GM10248 (cell line): ENCODE measurements at regions of chr6 and their contacts with region 1.

Region 1: GRCh38 chr6:149054559-149055194 is 262.8 kb upstream of the TAB2 start:
- DNase-seq: no peak
- CTCF ChIP-seq: no peak

Region 2: DNA sequence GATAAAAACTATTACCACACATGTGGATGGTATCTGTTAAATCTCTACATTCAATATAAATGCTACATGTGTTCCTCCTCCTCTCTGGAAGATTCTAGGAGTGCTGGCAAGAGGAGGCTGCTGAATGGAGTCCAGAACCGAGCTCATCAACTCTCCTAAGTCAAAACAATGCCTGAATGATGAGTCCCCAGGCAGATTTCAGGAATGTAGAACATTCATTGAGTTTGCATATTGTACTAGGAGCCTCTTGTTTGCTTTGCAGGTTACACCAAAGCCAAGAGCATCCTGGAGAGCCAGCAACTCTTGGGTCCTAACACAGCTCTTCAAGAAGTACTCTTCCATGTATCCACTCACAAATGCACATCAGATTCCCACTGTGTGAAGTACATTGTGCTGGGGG is 425.5 kb before region 1 on chr6:
- CTCF ChIA-PET with region 1: no interaction called
- POLR2A ChIA-PET with region 1: no interaction called
- DNase-seq: no peak
- CTCF ChIP-seq: no peak

Region 3: GRCh38 chr6:148972481-148972880 is 82.2 kb before region 1 on chr6:
- CTCF ChIA-PET with region 1: no interaction called
- POLR2A ChIA-PET with region 1: no interaction called
- DNase-seq: peak; percentile 63
- CTCF ChIP-seq: no peak

Region 4: GRCh38 chr6:149028767-149029405 is 25.8 kb before region 1 on chr6:
- CTCF ChIA-PET with region 1: interaction called, 26 read pairs
- POLR2A ChIA-PET with region 1: no interaction called
- DNase-seq: peak; percentile 59
- CTCF ChIP-seq: peak; percentile 54

Region 5: DNA sequence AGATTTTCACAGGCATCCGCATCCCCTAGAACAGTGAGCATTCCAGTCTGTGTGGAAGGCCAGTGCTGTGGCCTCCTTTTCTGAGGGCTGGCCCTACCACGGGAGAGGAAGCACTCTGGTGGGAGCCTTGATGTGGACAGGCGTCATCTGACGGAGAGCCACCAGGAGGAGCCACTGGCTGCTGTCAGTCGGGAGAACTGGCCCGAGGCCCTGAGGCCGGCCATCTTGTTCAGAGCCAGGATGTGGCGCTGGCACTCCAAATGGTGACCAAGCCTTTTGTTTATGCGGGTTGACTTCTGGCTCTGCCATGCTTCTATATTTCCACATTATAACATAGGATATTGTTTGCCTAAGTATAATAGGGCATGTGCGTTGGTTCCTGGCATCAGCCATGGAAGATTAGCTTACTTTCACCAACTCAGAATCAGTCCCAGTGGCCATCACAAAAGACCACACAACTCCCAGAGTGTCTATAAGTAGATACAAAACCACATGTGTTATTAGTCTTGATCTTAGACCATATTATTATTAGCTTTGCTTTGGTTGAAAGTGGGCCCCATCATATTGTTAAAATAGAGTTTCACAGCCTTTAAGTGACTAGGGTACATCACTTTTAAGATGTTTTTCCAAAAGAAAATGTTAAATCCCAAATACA is 11.1 kb before region 1 on chr6:
- CTCF ChIA-PET with region 1: interaction called, 59 read pairs
- POLR2A ChIA-PET with region 1: no interaction called
- DNase-seq: no peak
- CTCF ChIP-seq: peak; percentile 31

Region 6: DNA sequence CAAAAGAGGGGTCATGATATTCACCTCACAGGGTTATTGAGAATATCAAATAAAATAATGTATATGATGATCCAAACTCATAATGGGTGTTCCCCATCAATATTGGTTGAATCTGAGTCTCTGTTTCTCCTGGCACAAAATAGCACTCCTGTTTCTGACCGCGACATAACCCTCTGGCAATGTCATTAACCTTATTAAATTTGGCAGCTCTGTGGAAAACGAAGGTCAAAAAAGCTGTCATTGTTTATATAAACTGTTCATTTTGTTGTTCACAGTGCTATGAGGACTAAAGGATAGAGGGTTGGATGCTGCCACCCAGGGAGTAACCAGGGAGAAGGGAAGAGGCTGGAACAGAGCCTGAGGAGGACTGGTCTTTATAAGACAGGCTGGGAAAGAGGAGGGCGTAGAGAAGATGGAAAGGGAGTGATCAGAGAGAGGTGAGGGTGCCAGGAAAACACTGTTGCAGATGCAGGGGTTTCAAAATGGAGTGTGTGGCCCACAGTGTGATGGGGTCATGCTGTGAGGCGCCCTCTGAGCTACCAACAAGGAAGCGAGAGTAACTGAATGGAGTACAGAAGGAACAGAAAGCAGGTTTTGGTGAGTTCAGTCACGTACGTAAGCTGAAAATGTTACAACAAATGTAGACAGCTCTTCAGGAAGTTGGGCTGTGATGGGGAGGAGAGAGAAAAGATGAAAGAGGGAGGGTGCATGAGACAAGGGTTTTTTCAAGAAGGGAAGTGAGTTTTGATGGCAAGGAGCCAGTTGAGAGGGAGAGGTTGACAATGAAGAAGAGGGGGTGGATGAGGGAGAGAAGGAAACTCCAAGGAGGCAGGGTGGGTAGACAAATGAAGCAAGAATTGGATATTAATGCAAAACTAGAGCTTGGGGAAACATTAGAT is 11.2 kb after region 1 on chr6:
- CTCF ChIA-PET with region 1: interaction called, 11 read pairs
- POLR2A ChIA-PET with region 1: interaction called, 4 read pairs
- DNase-seq: peak; percentile 78
- CTCF ChIP-seq: no peak